Dendritic cell treated with granulocyte-macrophage colony-stimulating factor and Interleukin-4, amounts not matched to agents 40 ng/mL and 50 ng/mL, for 4 days (primary cell): ENCODE measurements at regions of chr15 and their contacts with region 1.

Region 1: GRCh38 chr15:82999905-83000671 is 11.4 kb downstream of the C15orf40 start:
- H3K4me3 Mint-ChIP-seq: peak overlapping the region; percentile 79
- H3K27ac Mint-ChIP-seq: peak overlapping the region; percentile 68
- H3K4me1 Mint-ChIP-seq: peaks cover 7% of the 10 kb centered on the region
- H3K27me3 Mint-ChIP-seq: no peaks in the 10 kb centered on the region

Region 2: DNA sequence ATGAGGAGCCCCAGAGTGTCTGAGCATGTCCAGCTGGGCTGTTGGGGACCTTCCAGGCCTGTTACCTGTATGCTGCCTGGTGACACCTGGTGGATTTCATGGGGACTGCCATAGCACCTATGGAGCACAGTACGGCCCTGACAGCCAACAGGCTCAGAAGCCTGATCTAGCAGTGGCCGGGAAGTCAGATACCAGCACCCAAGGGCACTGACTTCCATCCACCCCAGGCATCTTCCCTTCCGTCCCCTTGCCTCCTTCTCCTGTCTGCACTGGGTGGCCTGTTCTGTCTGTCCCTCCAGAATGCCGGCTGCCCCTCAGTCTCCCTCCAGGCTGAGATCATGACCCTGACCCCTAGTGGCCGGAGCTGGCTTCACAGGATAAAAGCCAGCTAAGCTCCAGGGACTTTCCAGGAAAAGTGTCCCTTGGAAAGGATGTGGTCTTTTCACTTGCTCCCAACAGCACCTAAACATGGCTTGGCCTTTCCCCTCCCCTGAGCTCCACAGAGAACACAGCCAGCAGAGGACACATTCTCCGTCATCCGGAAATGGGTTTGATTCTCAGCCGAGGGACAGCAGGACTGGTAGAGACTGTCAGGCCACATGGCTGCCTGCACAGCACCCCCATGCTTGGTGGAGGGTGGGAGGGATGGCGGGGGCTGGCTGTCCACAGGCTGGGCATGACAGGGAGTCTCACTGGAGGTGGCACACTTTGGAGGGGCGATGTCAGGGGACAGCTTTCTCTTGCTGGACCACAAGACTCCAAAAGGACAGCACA is 469.3 kb before region 1 on chr15:
- intact Hi-C with region 1: loop called (anchors 10 kb)
- H3K4me3 Mint-ChIP-seq: no peak overlapping the region
- H3K27ac Mint-ChIP-seq: no peak overlapping the region
- H3K4me1 Mint-ChIP-seq: peaks cover 6% of the 10 kb centered on the region
- H3K27me3 Mint-ChIP-seq: no peaks in the 10 kb centered on the region

Region 3: GRCh38 chr15:82832601-82833361 is 167.3 kb before region 1 on chr15:
- intact Hi-C with region 1: loop called (anchors 5 kb)
- H3K4me3 Mint-ChIP-seq: peak overlapping the region; percentile 18
- H3K27ac Mint-ChIP-seq: peak overlapping the region; percentile 81
- H3K4me1 Mint-ChIP-seq: peaks cover 45% of the 10 kb centered on the region
- H3K27me3 Mint-ChIP-seq: no peaks in the 10 kb centered on the region

Region 4: DNA sequence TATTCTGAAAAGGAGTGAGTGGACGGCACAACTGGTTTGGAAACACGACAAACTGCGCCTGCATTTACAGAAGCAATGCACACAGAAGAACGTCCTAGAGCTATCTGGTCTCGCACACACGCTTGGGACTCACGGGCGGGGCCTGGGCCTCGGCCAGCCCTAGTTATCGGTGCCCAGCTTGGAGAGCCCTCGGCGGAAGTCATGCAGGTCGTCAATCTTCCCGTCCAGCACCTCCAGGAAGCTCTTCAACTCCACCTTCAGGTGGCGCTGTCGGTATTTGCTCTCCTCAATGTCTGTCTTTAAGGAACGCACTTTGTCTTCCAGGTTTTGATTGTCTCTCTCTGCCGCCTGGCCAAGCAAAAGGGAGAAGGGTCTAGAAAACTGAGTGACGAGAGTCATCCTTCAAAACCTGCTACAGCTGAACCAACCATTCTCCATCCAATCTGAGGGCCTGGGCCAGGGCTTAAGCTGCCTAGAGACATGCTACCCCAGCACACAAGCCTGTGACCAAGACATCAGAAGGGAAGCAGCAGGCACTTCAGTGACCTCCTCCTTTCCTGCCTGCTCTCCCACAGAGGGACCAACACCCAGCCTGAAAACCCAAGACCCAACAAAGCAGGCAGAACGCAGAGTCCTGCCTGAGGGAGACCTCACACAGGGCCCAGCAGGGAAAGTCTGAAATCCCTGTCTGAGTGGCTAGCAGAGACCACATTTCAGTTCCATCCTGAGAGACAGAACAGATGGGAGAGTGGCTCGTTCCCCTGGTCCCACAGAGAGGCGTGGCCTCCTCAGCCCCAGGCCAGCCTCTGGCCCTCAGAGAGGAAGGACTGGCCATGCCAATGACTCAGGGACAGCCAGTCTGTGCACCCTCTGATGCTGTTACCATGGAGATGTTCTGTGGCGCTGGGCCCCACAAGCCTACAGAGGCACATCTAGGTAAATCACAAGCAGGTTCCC is 150.3 kb before region 1 on chr15:
- intact Hi-C with region 1: loop called (anchors 5 kb)
- H3K4me3 Mint-ChIP-seq: no peak overlapping the region
- H3K27ac Mint-ChIP-seq: peak overlapping the region; percentile 52
- H3K4me1 Mint-ChIP-seq: peaks cover 65% of the 10 kb centered on the region
- H3K27me3 Mint-ChIP-seq: no peaks in the 10 kb centered on the region

Region 5: DNA sequence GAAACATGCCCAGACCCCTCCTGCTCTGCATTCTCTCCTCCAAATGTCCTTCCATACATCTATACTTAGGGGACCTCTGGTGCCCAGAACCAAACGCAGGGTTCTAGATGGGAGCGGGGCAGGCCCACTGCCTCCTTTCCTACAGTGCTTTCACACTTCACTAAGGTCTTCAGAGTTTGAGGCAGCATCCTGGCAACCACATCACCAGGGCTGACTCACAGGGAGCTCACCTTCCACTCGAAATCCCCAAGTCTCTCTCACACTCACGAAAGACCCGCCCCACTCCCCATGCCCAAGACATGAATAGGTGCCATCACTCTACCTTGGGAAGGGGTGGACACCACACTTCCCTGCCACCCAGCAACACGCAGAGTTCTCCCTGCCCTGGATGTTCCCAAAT is 66.5 kb before region 1 on chr15:
- intact Hi-C with region 1: no loop called
- H3K4me3 Mint-ChIP-seq: no peak overlapping the region
- H3K27ac Mint-ChIP-seq: peak overlapping the region; percentile 61
- H3K4me1 Mint-ChIP-seq: peaks cover 76% of the 10 kb centered on the region
- H3K27me3 Mint-ChIP-seq: no peaks in the 10 kb centered on the region